Ovary (tissue), 10 donors: ENCODE measurements at regions of chr12 and their contacts with region 1.

Region 1: GRCh38 chr12:52167954-52168717 is 23.7 kb downstream of the KRT80 start:
- DNase-seq: no peak
- H3K4me3 ChIP-seq: no peak overlapping the region
- H3K27ac ChIP-seq: no peak overlapping the region
- H3K4me1 ChIP-seq: peaks cover 15% of the 10 kb centered on the region
- H3K27me3 ChIP-seq: no peaks in the 10 kb centered on the region
- CTCF ChIP-seq: no peak
- EP300 ChIP-seq: no peak
- POLR2A ChIP-seq: no peak

Region 2: GRCh38 chr12:52207895-52208294 is 39.8 kb after region 1 on chr12:
- intact Hi-C with region 1: loop called in 1 of 4 experiments (anchors 5 kb)
- DNase-seq: peak in 2 of 5 donors; percentile 5 to 27
- H3K4me3 ChIP-seq: no peak overlapping the region
- H3K27ac ChIP-seq: no peak overlapping the region
- H3K4me1 ChIP-seq: no peaks in the 10 kb centered on the region
- H3K27me3 ChIP-seq: no peaks in the 10 kb centered on the region
- CTCF ChIP-seq: no peak
- EP300 ChIP-seq: no peak
- POLR2A ChIP-seq: no peak

Region 3: DNA sequence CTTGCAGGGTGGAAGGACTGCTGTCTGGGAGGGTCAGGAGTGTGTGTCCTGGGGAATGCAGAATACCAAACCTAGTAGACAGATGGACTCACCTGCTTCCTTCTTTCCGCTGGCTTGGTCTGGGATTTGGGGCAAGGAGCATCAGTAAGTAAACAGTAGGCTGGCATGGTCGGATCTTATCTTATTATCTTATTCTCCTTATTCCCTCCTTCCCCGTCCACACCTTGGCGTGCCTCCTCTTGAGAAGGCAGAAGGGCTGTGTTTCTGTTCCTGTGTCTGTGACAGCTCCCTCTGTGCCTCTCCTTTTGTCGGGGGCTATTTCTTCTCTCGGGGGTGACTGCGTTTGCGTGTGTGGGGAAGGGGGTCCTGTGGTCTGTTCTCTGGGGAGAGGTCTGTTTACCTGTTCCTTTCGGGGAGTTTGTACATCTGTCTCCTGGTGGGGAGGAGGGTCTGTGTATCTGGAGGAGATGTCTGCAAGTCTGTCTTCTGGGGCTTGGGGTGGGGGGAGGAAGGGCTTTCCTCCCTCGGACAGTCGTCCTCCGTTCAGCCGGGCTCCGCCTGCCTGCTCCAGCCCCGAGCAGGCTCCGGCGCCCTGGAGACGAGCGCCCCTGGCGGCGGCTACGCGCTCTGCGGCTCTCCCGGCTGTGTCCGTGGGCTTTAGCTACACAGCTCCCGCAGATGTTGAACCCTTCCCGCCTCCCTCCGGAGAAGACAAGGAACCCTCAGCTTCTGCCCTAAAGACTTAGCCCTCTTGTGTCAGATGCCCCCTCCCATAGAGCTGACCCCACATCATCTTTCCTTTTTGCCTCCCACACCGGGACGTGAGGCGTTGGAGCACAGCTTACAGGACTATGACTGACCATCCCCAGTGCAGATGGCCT is 110.6 kb after region 1 on chr12:
- intact Hi-C with region 1: loop called in 1 of 4 experiments (anchors 5 kb)
- DNase-seq: peak; percentile 51 to 84 (median 66)
- H3K4me3 ChIP-seq: no peak overlapping the region
- H3K27ac ChIP-seq: no peak overlapping the region
- H3K4me1 ChIP-seq: no peaks in the 10 kb centered on the region
- H3K27me3 ChIP-seq: no peaks in the 10 kb centered on the region
- CTCF ChIP-seq: peak; percentile 77 to 83 (median 83)
- EP300 ChIP-seq: no peak
- POLR2A ChIP-seq: no peak